Ascending aorta (tissue), 2 donors: ENCODE measurements at regions of chr14 and their contacts with region 1.

Region 1: DNA sequence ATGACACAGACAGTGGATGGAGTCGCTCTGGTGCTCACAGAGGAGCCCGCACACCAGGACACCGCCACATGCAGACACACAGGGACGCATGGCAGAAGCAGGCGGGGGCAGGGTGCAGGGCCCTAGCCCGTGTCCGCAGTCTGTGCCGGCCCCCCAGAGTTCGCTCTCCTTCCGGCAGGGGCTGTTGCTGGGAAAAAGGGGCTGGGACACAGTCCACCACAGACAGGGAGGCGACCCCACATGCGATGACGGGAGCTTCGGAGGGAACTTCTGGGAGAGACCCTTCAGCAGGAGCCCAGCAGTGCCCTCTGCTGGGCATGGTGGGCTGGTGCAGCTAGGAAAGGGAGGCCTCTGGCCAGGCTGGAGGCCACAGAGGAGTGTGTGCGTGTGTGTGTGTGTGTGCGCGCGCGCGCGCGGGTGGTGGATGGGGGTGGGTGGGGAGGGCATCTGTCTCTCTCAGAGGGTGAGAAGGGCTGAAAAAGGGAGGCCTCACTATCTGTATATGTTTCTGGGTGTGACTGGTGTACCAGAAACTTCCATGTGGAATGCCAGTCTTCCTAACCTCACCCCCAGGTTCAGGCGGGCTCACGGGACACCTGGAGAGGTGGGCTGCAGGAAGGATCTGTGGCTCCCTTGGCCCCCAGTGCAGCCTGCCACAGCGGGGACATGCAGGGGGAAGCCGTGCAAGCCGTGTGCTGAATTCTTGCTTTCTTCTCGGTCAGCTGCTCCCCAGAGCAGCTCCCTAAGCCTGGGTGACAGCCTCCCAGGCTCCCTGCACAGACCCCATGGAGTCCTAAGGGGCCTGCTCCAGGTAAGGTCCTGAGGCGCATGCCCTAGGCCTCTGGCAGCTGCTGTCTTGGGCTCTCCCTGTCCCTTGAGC is 60.7 kb downstream of the PLEKHG3 start:
- DNase-seq: peak in 1 of 2 donors; percentile 89
- H3K4me3 ChIP-seq: peak overlapping the region; percentile 27 to 57
- H3K27ac ChIP-seq: peak overlapping the region; percentile 79 to 87
- H3K4me1 ChIP-seq: peaks cover 16 to 30% of the 10 kb centered on the region in 2 donors
- H3K27me3 ChIP-seq: no peaks in the 10 kb centered on the region
- CTCF ChIP-seq: peak; percentile 94 to 96 (median 95)

Region 2: GRCh38 chr14:64671591-64671990 is 93.3 kb before region 1 on chr14:
- intact Hi-C with region 1: loop called (anchors 1 kb)
- DNase-seq: no peak
- H3K4me3 ChIP-seq: no peak overlapping the region
- H3K27ac ChIP-seq: no peak overlapping the region
- H3K4me1 ChIP-seq: peaks cover 0 to 5% of the 10 kb centered on the region in 2 donors
- H3K27me3 ChIP-seq: no peaks in the 10 kb centered on the region
- CTCF ChIP-seq: peak; percentile 70 to 80 (median 78)

Region 3: DNA sequence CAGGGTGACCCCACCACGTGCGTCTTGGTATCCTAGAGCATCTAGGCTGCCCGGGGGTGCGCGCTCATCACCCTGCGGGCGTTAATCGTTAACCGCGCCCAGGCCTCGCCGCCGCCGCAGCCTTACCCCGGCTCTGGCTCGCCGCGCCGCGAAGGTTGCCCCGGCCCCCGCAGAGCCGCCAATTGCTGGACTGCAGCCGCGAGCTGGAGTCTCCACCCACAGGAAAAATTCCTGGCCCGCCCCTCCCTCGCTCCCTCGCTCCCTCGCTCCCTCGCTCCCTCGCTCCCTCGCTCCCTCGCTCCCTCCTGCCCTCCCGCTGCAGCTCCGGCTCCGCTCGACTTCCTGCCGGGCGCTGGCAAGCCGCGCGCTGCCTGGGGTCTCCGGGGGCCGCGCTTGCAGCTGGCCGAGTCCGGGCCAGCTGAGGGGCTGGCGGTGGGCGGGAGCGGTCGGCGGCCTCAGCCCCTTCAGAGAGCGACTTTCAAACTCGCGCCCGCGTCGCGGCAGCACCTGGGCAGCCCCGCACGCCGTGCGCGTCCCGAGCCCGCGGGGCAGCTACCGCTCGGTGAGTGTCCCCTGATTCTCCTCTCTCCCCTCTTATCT is 60.6 kb before region 1 on chr14 and contains the start of gene PLEKHG3:
- intact Hi-C with region 1: loop called (anchors 1 kb)
- DNase-seq: peak in 1 of 2 donors; percentile 87
- H3K4me3 ChIP-seq: peak within 1 kb of the TSS; percentile 74 to 90
- H3K27ac ChIP-seq: peak within 1 kb of the TSS; percentile 88 to 95
- H3K4me1 ChIP-seq: peaks cover 7 to 35% of the 10 kb centered on the region in 2 donors
- H3K27me3 ChIP-seq: no peaks in the 10 kb centered on the region
- CTCF ChIP-seq: no peak
- total RNA-seq, gene PLEKHG3: 134 TPM

Region 4: DNA sequence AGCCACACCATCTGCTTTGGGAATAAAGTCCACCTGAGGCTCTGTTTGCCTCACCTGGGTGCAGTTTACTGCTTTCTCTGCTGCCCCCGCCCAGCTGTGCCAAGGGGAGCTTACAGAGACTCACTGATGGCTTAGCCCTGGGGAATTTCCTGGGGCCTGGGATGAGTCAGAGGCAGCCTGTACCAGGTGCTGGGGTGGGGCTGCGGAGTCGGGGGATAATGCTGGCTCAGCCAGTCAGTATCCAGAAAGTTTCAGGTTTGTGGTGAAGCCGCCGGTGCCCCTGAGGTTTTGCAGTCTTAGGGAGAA is 38.3 kb before region 1 on chr14:
- intact Hi-C with region 1: loop called (anchors 2 kb)
- DNase-seq: no peak
- H3K4me3 ChIP-seq: no peak overlapping the region
- H3K27ac ChIP-seq: peak overlapping the region; percentile 14 to 89
- H3K4me1 ChIP-seq: peaks cover 16 to 60% of the 10 kb centered on the region in 2 donors
- H3K27me3 ChIP-seq: no peaks in the 10 kb centered on the region
- CTCF ChIP-seq: no peak

Region 5: DNA sequence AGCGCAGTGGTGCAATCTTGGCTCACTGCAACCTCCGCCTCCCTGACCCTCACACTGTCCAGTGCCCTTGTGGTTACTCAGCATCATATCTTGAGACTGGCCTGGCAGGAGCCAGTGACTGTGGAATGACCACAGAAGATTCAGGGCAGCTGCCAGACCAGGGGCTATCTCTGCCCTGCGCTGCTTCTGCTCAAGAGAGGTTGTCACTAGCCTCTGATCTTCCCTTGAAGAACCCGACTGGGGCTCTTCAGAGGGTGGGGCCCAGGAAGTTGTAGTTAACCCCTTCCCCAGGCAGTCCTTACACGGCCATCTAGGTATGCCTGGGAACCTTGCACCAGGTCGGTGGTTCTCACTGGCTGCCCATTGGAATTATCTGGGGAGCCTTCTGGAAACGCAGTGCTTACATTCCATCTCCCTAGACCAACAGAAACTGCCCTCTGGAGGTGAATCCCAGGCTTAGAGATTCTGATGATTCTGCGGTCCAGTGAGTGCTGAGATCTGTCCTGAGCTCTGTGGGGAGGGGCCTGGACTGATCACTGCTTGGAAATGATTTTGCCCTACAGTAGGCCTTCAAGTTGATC is 19.3 kb before region 1 on chr14:
- intact Hi-C with region 1: loop called (anchors 1 kb)
- DNase-seq: no peak
- H3K4me3 ChIP-seq: no peak overlapping the region
- H3K27ac ChIP-seq: peak overlapping the region; percentile 78 to 84
- H3K4me1 ChIP-seq: peaks cover 6 to 25% of the 10 kb centered on the region in 2 donors
- H3K27me3 ChIP-seq: no peaks in the 10 kb centered on the region
- CTCF ChIP-seq: peak in 1 of 3 experiments; percentile 26

Region 6: GRCh38 chr14:64800000-64800399 is 35.1 kb after region 1 on chr14:
- intact Hi-C with region 1: loop called (anchors 2 kb)
- DNase-seq: no peak
- H3K4me3 ChIP-seq: no peak overlapping the region
- H3K27ac ChIP-seq: no peak overlapping the region
- H3K4me1 ChIP-seq: no peaks in the 10 kb centered on the region
- H3K27me3 ChIP-seq: no peaks in the 10 kb centered on the region
- CTCF ChIP-seq: peak in 2 of 3 experiments; percentile 15 to 44

Region 7: DNA sequence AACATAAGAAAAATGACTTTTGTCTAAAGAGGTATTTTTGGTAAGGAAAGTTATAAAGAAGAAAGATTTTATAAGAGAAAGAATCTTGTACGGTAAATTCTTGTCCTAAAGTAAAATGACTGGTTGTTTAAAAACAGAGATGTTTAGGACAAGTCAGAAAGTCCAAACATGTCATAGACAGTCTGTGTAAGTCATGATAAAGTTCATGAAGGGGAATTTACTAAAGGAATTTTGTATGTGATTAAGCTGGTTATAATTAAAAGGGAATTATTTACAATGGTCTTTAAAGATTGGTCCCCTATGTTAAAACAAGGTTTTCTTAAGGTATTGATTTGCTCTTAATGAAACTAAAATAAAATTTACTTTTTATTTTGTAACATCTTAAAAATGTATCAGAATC is 1451.9 kb after region 1 on chr14:
- intact Hi-C with region 1: no loop called
- DNase-seq: no peak
- H3K4me3 ChIP-seq: no peak overlapping the region
- H3K27ac ChIP-seq: no peak overlapping the region
- H3K4me1 ChIP-seq: no peaks in the 10 kb centered on the region
- H3K27me3 ChIP-seq: no peaks in the 10 kb centered on the region
- CTCF ChIP-seq: no peak